ENCODE measurements at regions of chrX and their contacts with region 1.

Region 1: DNA sequence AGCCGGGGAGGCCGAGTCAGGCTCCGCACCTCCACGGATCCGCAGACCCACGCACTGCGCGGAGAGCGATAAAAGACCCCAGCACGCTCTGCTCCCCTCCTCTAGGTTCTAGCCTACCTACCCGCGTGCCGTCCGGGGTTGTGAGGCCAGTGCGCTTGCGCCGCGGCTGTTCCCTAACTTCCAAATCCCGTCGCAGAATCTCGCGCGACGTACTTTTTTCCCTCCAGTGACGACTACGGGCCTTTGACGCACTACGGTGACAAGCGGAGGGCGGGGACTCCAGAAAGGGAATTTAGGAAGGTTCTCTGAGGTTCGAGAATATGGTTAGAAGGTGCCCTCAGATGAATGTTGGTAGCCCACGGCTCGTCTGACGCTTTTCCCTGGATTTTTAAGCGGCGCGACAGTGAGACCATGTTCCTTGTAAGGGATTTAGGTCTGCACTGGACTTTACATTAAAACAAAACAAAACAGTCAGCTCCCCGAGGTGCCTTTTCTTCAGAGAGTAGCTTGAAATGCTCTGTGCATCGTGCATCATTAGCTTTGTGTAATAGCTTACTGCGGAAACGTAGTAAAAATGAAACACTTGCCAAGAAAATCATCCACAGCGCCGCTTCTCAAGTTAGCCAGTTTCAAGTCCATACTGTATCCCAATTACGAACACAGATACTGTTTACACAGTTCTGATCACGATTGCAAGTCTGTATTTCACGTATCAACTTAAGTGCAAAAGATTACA is at the start of gene NKRF:
- DNase-seq: peak; percentile 89
- H3K4me3 Mint-ChIP-seq: peak within 1 kb of the TSS; percentile 88
- H3K27ac Mint-ChIP-seq: peak within 1 kb of the TSS; percentile 91
- H3K4me1 Mint-ChIP-seq: peaks cover 4% of the 10 kb centered on the region
- H3K27me3 Mint-ChIP-seq: no peaks in the 10 kb centered on the region
- CTCF ChIP-seq: no peak
- total RNA-seq, gene NKRF: 12.5 and 16.1 TPM in 2 replicates

Region 2: DNA sequence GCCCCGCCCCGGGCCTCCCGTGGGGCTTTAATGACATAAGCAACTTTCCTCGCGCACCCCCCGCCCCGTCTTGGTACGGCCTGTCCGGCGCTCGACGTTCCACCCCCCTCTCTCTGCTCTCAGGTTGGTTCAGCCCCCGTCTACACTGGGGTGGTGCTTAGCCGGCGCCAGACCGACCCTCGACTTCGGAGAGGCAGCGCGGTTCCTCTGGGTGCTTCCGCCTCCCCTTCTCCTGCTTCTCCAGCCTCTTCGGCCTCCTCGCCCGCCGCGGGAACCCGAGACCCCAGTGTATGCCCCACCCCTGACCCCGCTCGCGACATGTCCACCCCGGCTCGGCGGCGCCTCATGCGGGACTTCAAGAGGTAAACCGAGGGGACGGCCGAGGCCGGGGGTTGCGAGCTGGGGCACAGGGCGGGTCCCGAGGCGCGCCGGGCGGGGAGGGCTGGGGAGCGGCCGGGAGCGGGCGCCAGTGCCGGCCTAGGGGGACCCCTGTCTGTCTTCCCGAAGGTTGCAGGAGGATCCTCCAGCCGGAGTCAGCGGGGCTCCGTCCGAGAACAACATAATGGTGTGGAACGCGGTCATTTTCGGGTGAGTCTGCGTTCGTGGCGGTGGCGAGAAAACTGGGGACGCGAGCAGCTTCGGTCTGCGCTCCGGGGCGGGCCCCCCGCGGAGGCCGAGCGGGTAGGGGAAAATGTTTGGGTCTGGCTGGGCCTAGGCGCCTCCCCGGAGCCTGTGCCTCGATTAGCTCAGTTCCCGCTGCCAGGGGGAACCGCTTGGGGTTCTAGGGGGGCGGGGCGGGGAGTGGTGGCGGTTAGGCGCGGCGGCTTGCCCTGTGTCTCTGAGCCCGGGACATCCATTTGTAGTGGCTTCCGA is 31.8 kb before region 1 on chrX and contains the start of gene UBE2A:
- CTCF ChIA-PET with region 1: interaction called, 3 read pairs
- POLR2A ChIA-PET with region 1: interaction called, 48 read pairs
- intact Hi-C with region 1: no loop called
- DNase-seq: peak; percentile 83
- H3K4me3 Mint-ChIP-seq: peak within 1 kb of the TSS; percentile 76
- H3K27ac Mint-ChIP-seq: peak within 1 kb of the TSS; percentile 93
- H3K4me1 Mint-ChIP-seq: peaks cover 6% of the 10 kb centered on the region
- H3K27me3 Mint-ChIP-seq: no peaks in the 10 kb centered on the region
- CTCF ChIP-seq: peak; percentile 38
- total RNA-seq, gene UBE2A: 52.2 and 66.9 TPM in 2 replicates

Measured in MCF 10A (cell line).